A673 (cell line): ENCODE measurements at regions of chr4 and their contacts with region 1.

Region 1: GRCh38 chr4:140851032-140851636 is 94.9 kb upstream of the TBC1D9 start:
- DNase-seq: peak; percentile 84
- H3K4me3 ChIP-seq: no peak overlapping the region
- H3K27ac ChIP-seq: no peak overlapping the region
- H3K4me1 ChIP-seq: no peaks in the 10 kb centered on the region
- H3K27me3 ChIP-seq: no peaks in the 10 kb centered on the region
- CTCF ChIP-seq: peak; percentile 81

Region 2: GRCh38 chr4:140427106-140427961 is 423.8 kb before region 1 on chr4 and contains the start of gene CLGN:
- CTCF ChIA-PET with region 1: interaction called, 4 read pairs
- POLR2A ChIA-PET with region 1: no interaction called
- intact Hi-C with region 1: loop called (anchors 5 kb)
- DNase-seq: peak; percentile 87
- H3K4me3 ChIP-seq: peak within 1 kb of the TSS; percentile 68
- H3K27ac ChIP-seq: peak within 1 kb of the TSS; percentile 29
- H3K4me1 ChIP-seq: no peaks in the 10 kb centered on the region
- H3K27me3 ChIP-seq: no peaks in the 10 kb centered on the region
- CTCF ChIP-seq: peak; percentile 71
- total RNA-seq, gene CLGN: 7.3 and 9.2 TPM in 2 replicates

Region 3: GRCh38 chr4:140637836-140638235 is 213.3 kb before region 1 on chr4:
- CTCF ChIA-PET with region 1: no interaction called
- POLR2A ChIA-PET with region 1: no interaction called
- intact Hi-C with region 1: loop called (anchors 10 kb)
- DNase-seq: peak; percentile 59
- H3K4me3 ChIP-seq: no peak overlapping the region
- H3K27ac ChIP-seq: no peak overlapping the region
- H3K4me1 ChIP-seq: no peaks in the 10 kb centered on the region
- H3K27me3 ChIP-seq: no peaks in the 10 kb centered on the region
- CTCF ChIP-seq: peak; percentile 77